ACHN (cell line): ENCODE measurements at regions of chr18 and their contacts with region 1.

Region 1: DNA sequence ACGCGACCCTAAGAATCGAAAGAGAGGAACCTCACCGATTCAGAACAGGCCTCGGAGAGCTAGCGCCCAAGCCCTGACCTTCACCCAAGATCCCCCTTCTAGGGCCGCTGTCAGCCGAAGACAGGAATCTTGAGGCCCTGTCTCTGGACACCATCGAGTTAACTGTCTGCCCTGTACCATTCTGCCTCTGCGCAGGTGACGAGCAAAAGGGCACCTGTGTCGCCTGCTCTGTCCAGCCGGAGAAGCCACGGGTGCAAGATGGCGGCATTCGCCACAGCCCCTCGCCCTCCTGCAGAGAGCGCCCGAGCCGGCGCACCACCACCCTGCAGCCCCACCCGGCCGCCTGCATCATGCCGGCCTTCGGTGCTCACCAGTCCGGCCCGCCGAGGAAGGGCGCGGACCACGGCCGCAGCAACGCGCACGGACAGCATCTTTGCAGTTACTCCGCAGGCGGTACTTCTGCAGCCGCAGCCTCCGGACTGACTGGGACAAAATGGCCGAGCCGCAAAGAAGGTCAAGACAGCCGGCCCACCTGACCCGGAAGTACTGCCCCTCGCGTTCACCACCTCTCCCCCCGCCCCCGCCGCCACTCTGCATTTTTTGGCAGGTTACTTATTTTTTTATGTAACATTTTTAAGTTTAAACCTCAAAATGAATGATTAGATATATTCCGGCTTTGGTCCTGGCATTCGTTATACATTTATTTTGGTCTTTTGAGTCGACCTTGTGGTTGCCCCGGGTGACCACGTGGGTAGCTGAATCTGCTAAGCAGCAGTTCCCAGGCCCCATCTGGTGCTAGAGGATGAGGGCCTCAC is at the start of gene ATP5F1A:
- DNase-seq: peak; percentile 80

Region 2: DNA sequence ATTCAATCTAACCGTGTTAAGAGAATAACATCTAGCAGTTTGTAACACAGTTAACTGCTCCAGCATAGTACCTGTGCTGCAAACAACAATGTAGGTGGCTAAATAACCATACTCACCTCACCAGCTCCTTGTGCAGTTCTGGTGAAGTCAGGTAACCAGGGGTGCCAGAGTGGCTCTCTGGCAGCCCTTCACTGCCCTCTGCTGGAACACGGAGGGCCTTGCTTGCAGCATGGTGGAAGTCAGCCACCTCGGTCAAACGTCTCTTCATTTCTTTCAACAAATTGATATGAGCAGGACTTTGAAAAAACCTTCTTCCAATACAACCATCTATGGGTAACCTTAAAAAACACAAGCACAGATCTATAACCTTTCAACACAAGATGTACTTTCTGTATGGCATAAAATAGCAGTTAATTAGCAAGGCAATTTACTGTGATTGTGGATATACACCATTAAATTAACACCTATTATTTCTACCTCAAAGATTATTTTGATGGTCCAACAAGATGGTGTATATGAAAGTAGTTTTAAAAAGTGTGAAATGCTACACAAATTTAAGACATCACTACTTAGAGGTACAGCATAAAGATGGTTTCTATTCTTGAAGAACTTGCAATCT is 187.5 kb before region 1 on chr18:
- in situ Hi-C with region 1: loop called (anchors 25 kb)
- DNase-seq: peak; percentile 44

Region 3: GRCh38 chr18:45951016-45951714 is 146.8 kb before region 1 on chr18:
- in situ Hi-C with region 1: no loop called
- DNase-seq: peak; percentile 82